ENCODE measurements at regions of chr1 and their contacts with region 1.

Region 1: GRCh38 chr1:186494832-186495271 is 33.9 kb upstream of the PDC start:
- DNase-seq: no peak
- H3K4me3 ChIP-seq: no peak overlapping the region
- H3K27ac ChIP-seq: no peak overlapping the region
- H3K4me1 ChIP-seq: no peaks in the 10 kb centered on the region
- H3K27me3 ChIP-seq: no peaks in the 10 kb centered on the region
- CTCF ChIP-seq: no peak
- EP300 ChIP-seq: no peak
- POLR2A ChIP-seq: no peak

Region 2: GRCh38 chr1:185581961-185582725 is 912.7 kb before region 1 on chr1:
- in situ Hi-C with region 1: no loop called
- intact Hi-C with region 1: loop called (anchors 5 kb)
- DNase-seq: no peak
- H3K4me3 ChIP-seq: no peak overlapping the region
- H3K27ac ChIP-seq: no peak overlapping the region
- H3K4me1 ChIP-seq: no peaks in the 10 kb centered on the region
- H3K27me3 ChIP-seq: no peaks in the 10 kb centered on the region
- CTCF ChIP-seq: no peak
- EP300 ChIP-seq: no peak
- POLR2A ChIP-seq: no peak